ENCODE measurements at regions of chr6 and their contacts with region 1.

Region 1: GRCh38 chr6:131923356-131923755 is 27.8 kb downstream of the CCN2 start:
- DNase-seq: peak; percentile 63
- H3K4me3 ChIP-seq: no peak overlapping the region
- H3K27ac ChIP-seq: no peak overlapping the region
- H3K4me1 ChIP-seq: no peaks in the 10 kb centered on the region
- H3K27me3 ChIP-seq: no peaks in the 10 kb centered on the region
- CTCF ChIP-seq: peak; percentile 54 to 71 (median 62)
- EP300 ChIP-seq: no peak
- POLR2A ChIP-seq: no peak

Region 2: DNA sequence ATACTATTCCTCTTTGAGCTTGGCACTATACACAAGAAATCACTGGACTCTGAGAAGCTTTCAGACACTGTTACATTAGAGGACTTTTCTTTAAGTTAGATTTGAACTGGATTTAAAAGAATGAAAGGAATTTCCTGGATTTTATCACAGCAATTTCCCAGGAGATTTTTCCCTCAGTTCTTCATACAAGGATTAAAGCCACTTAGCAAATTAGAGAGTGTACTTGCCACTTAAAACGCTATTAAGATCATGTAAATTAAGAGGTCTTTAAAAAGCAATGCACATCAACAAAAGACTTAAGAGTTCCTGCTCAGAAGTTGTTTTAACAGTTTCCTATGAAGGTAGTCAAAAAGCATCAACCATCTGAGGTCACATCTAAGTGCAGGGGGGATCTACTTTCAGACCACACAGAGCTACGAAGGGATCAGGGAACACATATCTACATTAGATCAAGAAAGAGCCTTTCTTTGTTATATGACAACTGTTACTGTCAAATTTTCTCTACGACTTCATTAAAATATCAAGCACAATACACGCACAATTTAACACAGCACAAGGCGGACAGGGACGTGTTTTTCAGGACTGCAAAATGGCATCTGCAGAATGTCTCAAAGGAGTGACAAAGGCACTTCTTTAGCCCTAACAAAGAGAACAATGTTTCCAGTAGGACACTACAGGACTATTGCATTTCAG is 926.1 kb before region 1 on chr6:
- in situ Hi-C with region 1: no loop called
- intact Hi-C with region 1: no loop called
- DNase-seq: no peak
- H3K4me3 ChIP-seq: no peak overlapping the region
- H3K27ac ChIP-seq: no peak overlapping the region
- H3K4me1 ChIP-seq: peaks cover 7 to 31% (median 15%) of the 10 kb centered on the region in 4 donors
- H3K27me3 ChIP-seq: no peaks in the 10 kb centered on the region
- CTCF ChIP-seq: no peak
- EP300 ChIP-seq: no peak
- POLR2A ChIP-seq: no peak

Region 3: GRCh38 chr6:131348319-131348971 is 574.9 kb before region 1 on chr6:
- in situ Hi-C with region 1: no loop called
- intact Hi-C with region 1: no loop called
- DNase-seq: no peak
- H3K4me3 ChIP-seq: no peak overlapping the region
- H3K27ac ChIP-seq: no peak overlapping the region
- H3K4me1 ChIP-seq: no peaks in the 10 kb centered on the region
- H3K27me3 ChIP-seq: no peaks in the 10 kb centered on the region
- CTCF ChIP-seq: no peak
- EP300 ChIP-seq: no peak
- POLR2A ChIP-seq: no peak

Region 4: DNA sequence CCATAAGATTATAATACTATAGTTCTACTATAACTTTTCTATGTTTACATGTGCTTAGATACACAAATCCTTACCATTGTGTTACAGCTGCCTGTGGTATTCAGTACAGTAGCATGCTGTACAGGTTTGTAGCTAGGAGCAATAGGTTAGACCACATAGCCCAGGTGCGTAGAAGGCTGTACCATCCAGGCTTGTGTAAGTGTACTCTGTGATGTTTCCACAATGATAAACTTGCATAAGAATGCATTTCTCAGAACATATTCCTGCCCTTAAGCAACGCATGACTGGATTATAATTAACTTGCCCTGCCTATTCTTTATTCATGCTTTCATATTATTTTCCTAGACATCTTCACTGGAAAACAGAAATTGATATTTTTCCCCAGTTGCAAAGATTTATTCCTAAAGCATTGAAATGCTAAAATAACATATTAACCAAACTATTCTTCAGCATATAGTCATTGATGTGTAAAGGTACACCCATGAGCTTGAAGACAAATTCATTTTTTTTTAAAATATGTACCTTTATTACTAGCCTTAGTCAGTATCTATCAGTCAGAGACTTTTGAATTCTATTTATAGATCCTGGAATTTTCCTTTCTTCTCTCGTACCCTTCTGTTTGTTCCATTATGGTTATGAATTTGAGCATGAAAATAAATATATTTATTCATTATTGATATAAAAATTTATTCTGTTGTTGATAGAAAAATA is 205.4 kb before region 1 on chr6:
- in situ Hi-C with region 1: no loop called
- intact Hi-C with region 1: no loop called
- DNase-seq: no peak
- H3K4me3 ChIP-seq: no peak overlapping the region
- H3K27ac ChIP-seq: no peak overlapping the region
- H3K4me1 ChIP-seq: no peaks in the 10 kb centered on the region
- H3K27me3 ChIP-seq: no peaks in the 10 kb centered on the region
- CTCF ChIP-seq: no peak
- EP300 ChIP-seq: no peak
- POLR2A ChIP-seq: no peak

Region 5: DNA sequence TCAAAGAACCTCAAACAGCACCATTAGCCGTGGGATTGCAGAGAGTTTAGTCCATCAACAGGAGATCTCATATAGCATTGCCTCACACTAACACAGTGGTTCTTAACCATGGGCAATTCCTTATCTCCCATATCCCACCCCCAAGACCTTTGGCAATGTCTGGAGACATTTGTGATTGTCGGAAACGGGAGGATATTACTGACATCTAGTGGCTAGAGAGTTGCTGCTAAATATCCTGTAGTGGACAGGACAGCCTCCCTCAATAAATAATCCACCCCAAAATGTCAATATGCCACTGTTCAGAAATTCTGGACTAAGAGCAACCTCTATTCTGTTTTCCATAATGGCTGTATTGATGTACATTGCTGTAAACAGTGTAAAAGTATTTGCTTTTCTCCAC is 237.9 kb after region 1 on chr6:
- in situ Hi-C with region 1: loop called in 1 of 4 experiments (anchors 10 kb)
- intact Hi-C with region 1: no loop called
- DNase-seq: no peak
- H3K4me3 ChIP-seq: no peak overlapping the region
- H3K27ac ChIP-seq: no peak overlapping the region
- H3K4me1 ChIP-seq: no peaks in the 10 kb centered on the region
- H3K27me3 ChIP-seq: no peaks in the 10 kb centered on the region
- CTCF ChIP-seq: peak; percentile 39 to 52 (median 50)
- EP300 ChIP-seq: no peak
- POLR2A ChIP-seq: no peak

Region 6: DNA sequence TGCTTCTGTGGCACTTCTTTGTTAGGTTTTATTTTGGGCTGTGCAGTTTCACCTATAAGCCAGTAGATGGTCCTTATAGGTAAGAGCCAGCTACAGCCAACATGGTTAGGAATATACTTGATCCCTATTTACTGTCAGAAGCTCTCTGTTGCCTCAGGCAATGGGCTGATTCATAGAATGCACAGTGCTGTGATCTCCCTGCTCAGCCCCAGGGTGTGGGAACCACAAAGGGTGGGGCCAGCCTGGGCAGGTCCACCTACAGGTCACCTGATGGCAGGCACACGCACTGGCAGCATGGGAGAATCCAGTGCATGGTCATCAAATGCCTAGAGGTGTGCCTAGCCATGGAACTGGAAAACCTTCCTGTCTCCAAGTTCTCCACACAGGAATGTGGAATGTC is 286.0 kb after region 1 on chr6:
- in situ Hi-C with region 1: loop called in 3 of 4 experiments (anchors 5 to 25 kb)
- intact Hi-C with region 1: no loop called
- DNase-seq: no peak
- H3K4me3 ChIP-seq: no peak overlapping the region
- H3K27ac ChIP-seq: no peak overlapping the region
- H3K4me1 ChIP-seq: no peaks in the 10 kb centered on the region
- H3K27me3 ChIP-seq: no peaks in the 10 kb centered on the region
- CTCF ChIP-seq: no peak
- EP300 ChIP-seq: no peak
- POLR2A ChIP-seq: no peak

Region 7: GRCh38 chr6:132354512-132355167 is 431.3 kb after region 1 on chr6:
- in situ Hi-C with region 1: no loop called
- intact Hi-C with region 1: no loop called
- DNase-seq: peak; percentile 70
- H3K4me3 ChIP-seq: no peak overlapping the region
- H3K27ac ChIP-seq: no peak overlapping the region
- H3K4me1 ChIP-seq: no peaks in the 10 kb centered on the region
- H3K27me3 ChIP-seq: no peaks in the 10 kb centered on the region
- CTCF ChIP-seq: no peak
- EP300 ChIP-seq: no peak
- POLR2A ChIP-seq: no peak

Measured in transverse colon (tissue), 4 donors.